MCF 10A (cell line): ENCODE measurements at regions of chr12 and their contacts with region 1.

Region 1: DNA sequence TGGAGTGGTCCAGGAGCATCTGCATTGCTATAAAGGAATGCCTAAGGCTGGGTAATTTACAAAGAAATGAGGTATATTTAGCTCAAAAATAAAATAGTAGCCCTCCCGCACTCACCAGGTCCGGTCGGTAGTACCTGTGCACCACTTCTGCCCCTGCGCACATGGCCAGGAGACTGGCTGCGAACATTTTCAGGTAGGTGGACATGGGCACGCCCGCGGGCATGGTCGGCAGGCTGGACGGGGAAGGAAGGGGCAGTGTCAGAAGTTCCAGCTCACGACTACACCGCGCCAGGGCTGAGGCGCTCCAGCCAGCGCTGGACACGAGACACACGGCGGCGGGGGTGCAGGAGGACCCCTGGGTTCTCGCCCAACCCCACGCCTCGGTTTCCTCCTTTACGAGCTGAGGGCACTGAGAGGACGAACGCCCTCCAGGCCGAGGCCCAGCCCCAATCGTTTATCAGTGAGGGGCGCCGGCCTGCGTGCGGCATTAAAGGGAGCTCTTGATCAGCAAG is 9.1 kb upstream of the TDG start:
- DNase-seq: no peak
- H3K4me3 Mint-ChIP-seq: peak overlapping the region; percentile 87
- H3K27ac Mint-ChIP-seq: peak overlapping the region; percentile 93
- H3K4me1 Mint-ChIP-seq: peaks cover 28% of the 10 kb centered on the region
- H3K27me3 Mint-ChIP-seq: no peaks in the 10 kb centered on the region
- CTCF ChIP-seq: peak; percentile 5

Region 2: DNA sequence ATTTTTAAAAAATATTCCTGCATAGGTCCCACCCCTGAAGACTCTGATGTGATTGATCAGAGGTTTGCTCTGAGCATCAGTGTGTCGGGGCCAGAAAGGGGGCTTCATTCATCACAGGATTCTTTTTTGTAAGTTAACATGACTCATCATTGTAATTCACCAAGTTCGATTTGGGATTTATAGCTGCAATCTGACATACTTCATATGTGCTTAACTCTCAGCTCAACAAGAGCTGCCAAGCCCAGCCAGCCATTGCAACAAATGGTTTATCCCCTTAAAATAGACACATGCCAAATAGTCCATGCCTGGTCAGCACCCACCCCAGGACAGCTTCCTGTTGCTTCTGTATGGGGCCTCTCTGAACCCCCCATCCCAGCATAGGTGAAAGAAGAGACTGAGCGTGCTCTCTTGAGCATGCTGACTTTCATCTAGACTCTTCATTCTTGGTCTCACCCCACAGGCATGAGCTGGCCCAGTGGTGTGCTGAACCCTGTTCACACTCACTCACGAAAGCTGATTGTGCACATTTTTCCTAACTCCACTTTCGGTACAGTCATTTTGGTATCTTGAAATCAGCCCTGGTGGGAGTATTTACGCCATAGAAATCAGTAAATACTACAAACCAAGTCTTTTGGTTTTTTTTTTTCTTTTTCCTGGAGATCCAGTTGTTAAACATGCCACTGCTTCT is 268.1 kb before region 1 on chr12:
- CTCF ChIA-PET with region 1: no interaction called
- POLR2A ChIA-PET with region 1: no interaction called
- intact Hi-C with region 1: no loop called
- DNase-seq: no peak
- H3K4me3 Mint-ChIP-seq: no peak overlapping the region
- H3K27ac Mint-ChIP-seq: no peak overlapping the region
- H3K4me1 Mint-ChIP-seq: no peaks in the 10 kb centered on the region
- H3K27me3 Mint-ChIP-seq: peaks cover 20% of the 10 kb centered on the region
- CTCF ChIP-seq: no peak

Region 3: DNA sequence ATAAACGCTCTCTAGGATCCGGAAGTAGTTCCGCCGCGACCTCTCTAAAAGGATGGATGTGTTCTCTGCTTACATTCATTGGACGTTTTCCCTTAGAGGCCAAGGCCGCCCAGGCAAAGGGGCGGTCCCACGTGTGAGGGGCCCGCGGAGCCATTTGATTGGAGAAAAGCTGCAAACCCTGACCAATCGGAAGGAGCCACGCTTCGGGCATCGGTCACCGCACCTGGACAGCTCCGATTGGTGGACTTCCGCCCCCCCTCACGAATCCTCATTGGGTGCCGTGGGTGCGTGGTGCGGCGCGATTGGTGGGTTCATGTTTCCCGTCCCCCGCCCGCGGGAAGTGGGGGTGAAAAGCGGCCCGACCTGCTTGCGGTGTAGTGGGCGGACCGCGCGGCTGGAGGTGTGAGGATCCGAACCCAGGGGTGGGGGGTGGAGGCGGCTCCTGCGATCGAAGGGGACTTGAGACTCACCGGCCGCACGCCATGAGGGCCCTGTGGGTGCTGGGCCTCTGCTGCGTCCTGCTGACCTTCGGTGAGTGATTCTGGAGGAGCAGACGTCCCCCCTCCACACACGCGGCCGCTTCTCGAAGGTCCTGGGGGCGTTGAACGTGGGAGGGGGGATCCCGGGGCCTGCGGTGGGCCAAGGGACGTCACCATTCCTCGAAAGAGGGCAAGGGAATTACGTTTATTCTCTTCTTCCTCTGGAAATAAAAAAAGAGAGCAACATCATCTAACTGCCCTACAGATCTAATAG is 26.4 kb before region 1 on chr12 and contains the start of gene HSP90B1:
- CTCF ChIA-PET with region 1: interaction called, 3 read pairs
- POLR2A ChIA-PET with region 1: interaction called, 74 read pairs
- intact Hi-C with region 1: loop called (anchors 1 kb)
- DNase-seq: peak; percentile 100
- H3K4me3 Mint-ChIP-seq: peak within 1 kb of the TSS; percentile 75
- H3K27ac Mint-ChIP-seq: peak within 1 kb of the TSS; percentile 58
- H3K4me1 Mint-ChIP-seq: peaks cover 23% of the 10 kb centered on the region
- H3K27me3 Mint-ChIP-seq: no peaks in the 10 kb centered on the region
- CTCF ChIP-seq: no peak
- total RNA-seq, gene HSP90B1: 1,052 and 1,334 TPM in 2 replicates

Region 4: DNA sequence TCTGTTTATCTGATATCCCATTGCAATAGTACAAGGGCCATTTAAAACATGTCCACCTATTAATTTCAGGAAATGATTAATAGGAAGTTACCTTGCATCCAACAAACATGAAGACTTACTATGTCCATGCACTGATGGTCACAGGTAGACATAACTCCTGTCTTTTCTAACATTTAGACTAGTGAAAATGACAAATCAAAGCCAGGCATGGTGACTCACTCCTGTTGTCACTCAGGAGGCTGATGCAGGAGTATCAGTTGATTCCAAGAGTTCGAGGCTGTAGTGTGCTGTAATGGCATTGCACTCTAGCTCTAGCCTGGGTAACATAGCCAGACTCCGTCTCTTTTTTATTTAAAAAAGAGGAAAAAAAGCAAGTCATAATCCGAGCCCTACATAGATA is 11.6 kb before region 1 on chr12:
- CTCF ChIA-PET with region 1: interaction called, 3 read pairs
- POLR2A ChIA-PET with region 1: interaction called, 12 read pairs
- intact Hi-C with region 1: no loop called
- DNase-seq: no peak
- H3K4me3 Mint-ChIP-seq: no peak overlapping the region
- H3K27ac Mint-ChIP-seq: peak overlapping the region; percentile 39
- H3K4me1 Mint-ChIP-seq: no peaks in the 10 kb centered on the region
- H3K27me3 Mint-ChIP-seq: no peaks in the 10 kb centered on the region
- CTCF ChIP-seq: no peak

Region 5: GRCh38 chr12:103978384-103978982 is 21.9 kb after region 1 on chr12:
- CTCF ChIA-PET with region 1: interaction called, 3 read pairs
- POLR2A ChIA-PET with region 1: interaction called, 10 read pairs
- intact Hi-C with region 1: no loop called
- DNase-seq: no peak
- H3K4me3 Mint-ChIP-seq: no peak overlapping the region
- H3K27ac Mint-ChIP-seq: no peak overlapping the region
- H3K4me1 Mint-ChIP-seq: peaks cover 5% of the 10 kb centered on the region
- H3K27me3 Mint-ChIP-seq: no peaks in the 10 kb centered on the region
- CTCF ChIP-seq: no peak

Region 6: DNA sequence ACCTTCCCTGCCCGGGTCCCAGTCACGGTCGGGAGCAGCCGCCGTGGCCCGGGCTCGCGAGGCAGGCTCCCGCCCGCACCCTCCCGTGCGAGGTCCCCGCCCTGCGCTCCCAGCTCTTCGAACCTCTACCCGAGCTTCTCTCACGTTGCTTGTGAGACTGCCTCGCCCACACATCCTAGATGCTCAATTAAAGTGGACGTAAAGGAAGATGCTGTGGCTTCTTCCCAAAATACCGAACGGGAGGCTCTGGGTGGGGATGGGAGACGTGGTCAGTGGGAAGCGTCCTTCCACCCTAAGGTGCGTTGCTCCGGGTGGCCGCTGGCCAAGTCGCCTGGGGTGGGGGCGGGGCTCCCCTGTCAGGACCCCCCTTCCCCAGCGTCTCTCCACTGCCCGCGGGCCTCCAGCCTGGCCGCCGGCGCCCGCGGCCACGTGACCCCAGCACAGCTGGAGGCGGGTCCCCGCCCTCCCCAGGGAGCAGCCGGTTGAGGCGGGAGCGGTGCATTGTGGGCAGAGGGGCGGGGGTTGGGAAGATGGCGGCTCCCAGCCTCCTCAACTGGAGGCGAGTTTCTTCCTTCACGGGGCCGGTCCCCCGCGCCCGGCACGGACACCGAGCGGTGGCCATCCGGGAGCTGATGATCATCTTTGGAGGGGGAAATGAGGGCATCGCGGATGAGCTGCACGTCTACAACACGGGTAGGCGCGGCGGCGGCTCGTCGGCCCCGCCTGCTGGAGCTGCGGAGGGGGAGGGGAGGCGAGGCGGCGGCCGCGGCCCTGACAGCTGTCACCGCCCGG is 107.7 kb after region 1 on chr12 and contains the start of gene HCFC2:
- CTCF ChIA-PET with region 1: no interaction called
- POLR2A ChIA-PET with region 1: interaction called, 14 read pairs
- intact Hi-C with region 1: no loop called
- DNase-seq: peak; percentile 82
- H3K4me3 Mint-ChIP-seq: peak within 1 kb of the TSS; percentile 91
- H3K27ac Mint-ChIP-seq: peak within 1 kb of the TSS; percentile 75
- H3K4me1 Mint-ChIP-seq: peaks cover 15% of the 10 kb centered on the region
- H3K27me3 Mint-ChIP-seq: no peaks in the 10 kb centered on the region
- CTCF ChIP-seq: no peak
- total RNA-seq, gene HCFC2: 10.3 and 11.4 TPM in 2 replicates